ENCODE measurements at regions of chr10 and their contacts with region 1.

Region 1: GRCh38 chr10:91632671-91633550 is at the start of gene PPP1R3C:
- DNase-seq: peak; percentile 84
- H3K4me3 ChIP-seq: peak within 1 kb of the TSS; percentile 4 to 54 (median 51)
- H3K27ac ChIP-seq: no peak within 1 kb of the TSS
- H3K4me1 ChIP-seq: peaks cover 13% of the 10 kb centered on the region
- H3K27me3 ChIP-seq: peaks cover 2 to 3% of the 10 kb centered on the region in 2 experiments
- CTCF ChIP-seq: peak; percentile 6 to 37
- POLR2A ChIP-seq: peak; percentile 71
- total RNA-seq, gene PPP1R3C: 0.74 and 1.6 TPM in 2 replicates

Region 2: GRCh38 chr10:90879062-90879461 is 753.8 kb before region 1 on chr10:
- CTCF ChIA-PET with region 1: interaction called, 16 read pairs
- POLR2A ChIA-PET with region 1: no interaction called
- dilution Hi-C with region 1: no loop called
- intact Hi-C with region 1: loop called (anchors 1 kb)
- DNase-seq: no peak
- H3K4me3 ChIP-seq: no peak overlapping the region
- H3K27ac ChIP-seq: no peak overlapping the region
- H3K4me1 ChIP-seq: no peaks in the 10 kb centered on the region
- H3K27me3 ChIP-seq: no peaks in the 10 kb centered on the region
- CTCF ChIP-seq: no peak
- POLR2A ChIP-seq: no peak

Region 3: GRCh38 chr10:91043173-91043910 is 589.6 kb before region 1 on chr10:
- CTCF ChIA-PET with region 1: no interaction called
- POLR2A ChIA-PET with region 1: no interaction called
- dilution Hi-C with region 1: no loop called
- intact Hi-C with region 1: no loop called
- DNase-seq: peak; percentile 56
- H3K4me3 ChIP-seq: no peak overlapping the region
- H3K27ac ChIP-seq: no peak overlapping the region
- H3K4me1 ChIP-seq: no peaks in the 10 kb centered on the region
- H3K27me3 ChIP-seq: no peaks in the 10 kb centered on the region
- CTCF ChIP-seq: peak; percentile 34 to 37
- POLR2A ChIP-seq: no peak

Region 4: DNA sequence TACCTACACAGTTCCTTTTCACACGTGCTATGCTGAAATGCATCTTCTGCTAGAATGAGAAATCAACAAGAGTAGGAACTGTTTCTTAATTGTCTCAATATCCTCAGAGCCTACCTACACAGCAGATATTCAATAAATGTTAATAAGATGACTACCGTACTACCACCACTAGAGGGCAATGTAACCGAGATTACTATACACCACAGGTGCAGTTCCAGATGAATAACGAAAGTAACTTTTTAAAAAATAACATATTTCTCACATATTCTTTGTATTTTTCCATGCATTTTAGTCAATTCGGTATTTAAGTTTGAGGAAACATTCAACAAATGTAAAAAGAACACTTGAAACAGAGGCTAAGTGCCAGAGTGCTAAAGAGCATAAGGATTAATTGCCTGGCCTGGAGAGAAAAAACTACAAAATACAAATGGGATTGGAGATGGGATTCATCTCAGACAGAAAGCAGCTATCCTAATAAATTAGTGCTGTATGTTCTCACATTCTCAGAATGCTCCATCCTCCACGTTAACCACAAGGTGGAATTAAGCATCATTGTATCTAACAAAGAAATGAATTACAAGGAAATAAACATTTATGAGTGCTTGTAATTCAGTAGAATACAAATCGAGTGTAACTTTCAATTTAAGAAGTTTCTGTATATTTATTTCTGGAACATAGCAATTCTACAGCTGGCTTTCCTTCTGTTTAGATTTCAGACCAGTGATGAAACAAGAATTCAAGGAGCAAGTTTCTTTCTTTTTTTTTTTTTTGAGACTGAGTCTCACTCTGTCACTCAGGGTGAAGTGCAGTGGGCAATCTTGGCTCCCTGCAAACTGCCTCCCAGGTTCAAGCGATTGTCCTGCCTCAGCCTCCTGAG is 243.0 kb before region 1 on chr10:
- CTCF ChIA-PET with region 1: interaction called, 32 read pairs
- POLR2A ChIA-PET with region 1: no interaction called
- dilution Hi-C with region 1: no loop called
- intact Hi-C with region 1: loop called (anchors 1 kb)
- DNase-seq: peak; percentile 64
- H3K4me3 ChIP-seq: peak overlapping the region in 1 of 3 experiments; percentile 27
- H3K27ac ChIP-seq: no peak overlapping the region
- H3K4me1 ChIP-seq: peaks cover 5% of the 10 kb centered on the region
- H3K27me3 ChIP-seq: peaks cover 14 to 31% of the 10 kb centered on the region in 2 experiments
- CTCF ChIP-seq: peak; percentile 27 to 28
- POLR2A ChIP-seq: no peak

Region 5: GRCh38 chr10:91551856-91552255 is 81.1 kb before region 1 on chr10:
- CTCF ChIA-PET with region 1: interaction called, 226 read pairs
- POLR2A ChIA-PET with region 1: no interaction called
- dilution Hi-C with region 1: no loop called
- intact Hi-C with region 1: loop called (anchors 1 kb)
- DNase-seq: peak; percentile 78
- H3K4me3 ChIP-seq: no peak overlapping the region
- H3K27ac ChIP-seq: no peak overlapping the region
- H3K4me1 ChIP-seq: no peaks in the 10 kb centered on the region
- H3K27me3 ChIP-seq: peaks cover 0 to 1% of the 10 kb centered on the region in 2 experiments
- CTCF ChIP-seq: peak; percentile 68 to 87
- POLR2A ChIP-seq: no peak

Region 6: DNA sequence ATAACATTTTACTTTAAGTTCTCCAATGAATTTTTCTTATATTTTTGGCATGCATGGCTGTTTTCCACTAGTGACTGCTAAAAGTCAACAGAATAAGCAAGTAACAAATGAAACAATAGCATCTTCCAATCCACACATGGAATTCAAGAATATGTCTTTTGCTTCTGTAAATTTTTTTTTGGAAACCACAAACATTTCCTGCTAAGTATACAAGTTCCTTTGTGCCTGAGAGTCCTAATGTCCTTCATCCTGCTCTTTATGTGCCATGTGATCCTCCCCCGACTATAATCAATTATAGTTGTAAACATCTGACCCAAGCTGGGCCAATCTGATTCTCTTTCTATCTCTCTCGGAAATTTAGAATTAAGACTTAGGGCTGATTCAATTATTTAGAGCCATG is 61.2 kb before region 1 on chr10:
- CTCF ChIA-PET with region 1: interaction called, 13 read pairs
- POLR2A ChIA-PET with region 1: no interaction called
- dilution Hi-C with region 1: no loop called
- intact Hi-C with region 1: no loop called
- DNase-seq: no peak
- H3K4me3 ChIP-seq: no peak overlapping the region
- H3K27ac ChIP-seq: no peak overlapping the region
- H3K4me1 ChIP-seq: no peaks in the 10 kb centered on the region
- H3K27me3 ChIP-seq: no peaks in the 10 kb centered on the region
- CTCF ChIP-seq: no peak
- POLR2A ChIP-seq: no peak

Region 7: DNA sequence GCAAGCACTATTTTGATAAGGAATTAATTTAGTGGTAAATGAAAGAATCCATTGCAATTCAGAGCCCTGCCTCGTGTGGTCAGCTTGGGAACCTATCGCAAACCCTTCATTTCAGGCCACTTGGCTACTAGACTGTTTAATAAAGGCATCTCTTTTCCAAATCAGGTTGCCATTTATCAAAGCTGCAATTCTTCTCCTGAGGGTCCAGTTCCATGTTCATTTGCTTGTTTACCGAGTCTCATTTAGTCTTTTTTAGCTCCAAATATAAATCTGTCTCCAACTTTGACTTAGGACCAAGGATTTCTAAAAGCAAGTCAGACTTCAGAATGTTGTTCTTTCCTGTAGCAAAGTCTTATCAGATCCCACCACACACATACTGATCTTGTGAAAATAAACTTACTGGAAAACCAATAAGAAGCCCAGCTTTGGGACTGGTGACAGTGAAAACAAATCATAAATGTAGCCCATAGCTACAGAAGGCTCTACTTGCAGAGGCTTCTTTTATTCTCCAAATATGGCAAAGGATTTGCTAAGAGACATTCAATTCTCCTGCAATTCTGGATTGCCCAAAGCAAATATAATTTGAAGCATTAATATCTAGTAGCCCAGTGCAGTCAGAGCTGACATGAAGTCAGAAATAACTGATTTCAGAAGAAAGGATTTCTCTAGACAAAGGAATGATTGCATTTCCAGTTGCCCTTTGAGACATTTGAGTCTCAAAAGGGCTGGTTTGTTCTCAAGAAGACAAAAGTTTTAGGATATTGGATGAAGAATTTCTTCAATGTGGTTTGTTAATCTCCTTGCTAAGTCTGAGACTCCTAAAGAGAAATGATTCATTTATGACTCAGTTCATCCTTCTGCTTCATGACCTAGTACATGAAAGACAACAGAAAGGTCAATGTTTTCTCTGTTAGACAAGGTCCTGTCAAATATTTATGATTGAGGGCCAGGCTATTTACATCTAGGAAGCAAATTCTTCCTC is 28.1 kb before region 1 on chr10:
- CTCF ChIA-PET with region 1: interaction called, 10 read pairs
- POLR2A ChIA-PET with region 1: interaction called, 9 read pairs
- dilution Hi-C with region 1: no loop called
- intact Hi-C with region 1: no loop called
- DNase-seq: peak; percentile 95
- H3K4me3 ChIP-seq: no peak overlapping the region
- H3K27ac ChIP-seq: peak overlapping the region; percentile 78
- H3K4me1 ChIP-seq: peaks cover 27% of the 10 kb centered on the region
- H3K27me3 ChIP-seq: no peaks in the 10 kb centered on the region
- CTCF ChIP-seq: peak in 1 of 2 donors; percentile 26
- POLR2A ChIP-seq: peak; percentile 33

Region 8: DNA sequence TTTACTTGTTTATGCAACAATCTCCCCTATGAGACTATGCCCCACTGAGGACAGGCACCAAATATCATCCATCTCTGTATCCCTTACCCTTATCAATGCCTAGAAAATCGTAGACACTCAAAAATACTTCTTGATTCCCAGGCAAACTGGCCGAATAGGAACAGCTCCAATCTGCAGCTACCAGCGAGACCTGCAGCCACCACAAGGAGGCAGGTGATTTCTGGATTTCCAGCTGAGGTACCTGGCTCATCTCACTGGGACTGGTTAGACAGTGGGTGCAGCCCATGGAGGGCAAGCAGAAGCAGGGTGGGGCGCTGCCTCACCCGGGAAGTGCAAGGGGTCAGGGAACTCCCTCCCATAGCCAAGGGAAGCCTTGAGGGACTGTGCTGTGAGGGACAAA is 10.8 kb after region 1 on chr10:
- CTCF ChIA-PET with region 1: interaction called, 12 read pairs
- POLR2A ChIA-PET with region 1: interaction called, 3 read pairs
- dilution Hi-C with region 1: no loop called
- intact Hi-C with region 1: no loop called
- DNase-seq: no peak
- H3K4me3 ChIP-seq: no peak overlapping the region
- H3K27ac ChIP-seq: no peak overlapping the region
- H3K4me1 ChIP-seq: no peaks in the 10 kb centered on the region
- H3K27me3 ChIP-seq: peaks cover 3 to 14% of the 10 kb centered on the region in 2 experiments
- CTCF ChIP-seq: peak in 1 of 2 donors; percentile 12
- POLR2A ChIP-seq: no peak

Measured in endothelial cell of umbilical vein (primary cell).